HEK293 (cell line): ENCODE measurements at regions of chr19 and their contacts with region 1.

Region 1: DNA sequence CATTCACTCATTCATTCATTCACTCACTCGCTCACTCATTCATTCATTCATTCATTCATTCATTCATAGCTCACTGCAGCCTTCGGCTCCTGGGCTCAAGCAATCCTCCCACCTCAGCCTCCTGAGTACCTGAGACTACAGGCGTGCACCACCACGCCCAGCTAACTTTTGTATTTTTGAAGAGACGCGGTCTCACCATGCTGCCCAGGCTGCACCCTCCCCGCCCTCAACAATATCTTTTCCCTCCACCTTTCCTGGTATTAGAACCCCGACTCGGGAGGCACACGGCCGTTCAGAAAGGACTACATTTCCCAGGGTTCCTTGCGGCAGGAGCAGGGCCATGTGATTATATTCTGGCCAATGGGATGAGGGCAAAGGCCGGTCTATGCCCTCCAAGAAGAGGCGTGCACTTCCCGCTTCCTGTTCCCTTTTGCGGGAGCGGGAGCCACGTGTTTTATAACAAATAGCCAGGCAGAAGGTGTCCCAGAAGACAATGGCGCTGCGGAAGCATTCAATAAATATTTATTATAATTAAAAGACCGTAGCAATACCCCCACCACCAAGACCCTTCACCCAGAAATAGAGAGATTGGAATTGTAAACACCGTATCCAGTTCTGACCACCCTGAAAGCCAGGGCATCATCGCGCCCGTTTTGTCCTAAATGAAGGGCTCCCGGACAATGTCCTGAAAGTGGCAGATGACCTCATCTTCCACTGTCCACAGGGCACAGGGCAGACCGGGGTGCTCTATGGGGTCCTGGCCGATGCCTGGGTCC is 15.9 kb downstream of the TICAM1 start:
- H3K4me3 ChIP-seq: no peak overlapping the region
- H3K27ac ChIP-seq: no peak overlapping the region
- H3K4me1 ChIP-seq: no peaks in the 10 kb centered on the region
- CTCF ChIP-seq: no peak

Region 2: DNA sequence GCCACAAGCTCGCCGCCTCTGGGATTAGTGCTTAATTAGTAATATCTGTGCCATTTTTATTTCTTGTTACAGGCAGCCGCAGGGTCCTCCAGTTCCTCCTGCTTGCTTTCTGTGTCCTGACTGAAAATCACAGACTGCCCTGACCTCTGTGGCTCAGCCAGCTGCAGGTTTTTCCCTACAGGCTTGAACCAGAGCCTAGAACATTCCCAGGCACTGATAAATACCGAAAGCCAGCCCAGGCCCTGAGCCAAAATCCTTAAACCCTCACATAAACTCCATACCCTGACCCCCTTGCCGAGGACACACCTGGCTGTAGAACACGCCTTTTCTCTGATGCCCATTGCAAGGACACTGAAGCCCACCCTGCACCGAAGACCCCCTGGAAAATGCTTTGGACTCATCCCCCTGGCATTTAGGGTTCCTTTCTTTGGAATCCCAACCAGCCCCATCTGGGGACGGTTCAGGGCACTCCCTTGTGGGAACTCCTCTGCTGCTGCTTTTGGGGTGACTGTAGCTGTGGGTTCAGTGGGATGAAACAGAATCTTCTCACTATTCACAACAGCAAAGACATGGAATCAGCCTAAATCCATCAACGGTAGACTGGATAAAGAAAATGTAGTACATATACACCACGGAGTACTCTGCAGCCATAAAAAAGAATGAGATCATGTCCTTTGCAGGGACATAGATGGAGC is 107.5 kb before region 1 on chr19:
- CTCF ChIA-PET with region 1: no interaction called
- POLR2A ChIA-PET with region 1: no interaction called
- H3K4me3 ChIP-seq: no peak overlapping the region
- H3K27ac ChIP-seq: no peak overlapping the region
- H3K4me1 ChIP-seq: no peaks in the 10 kb centered on the region
- CTCF ChIP-seq: no peak

Region 3: GRCh38 chr19:4851551-4852290 is 36.1 kb after region 1 on chr19:
- CTCF ChIA-PET with region 1: interaction called, 171 read pairs
- POLR2A ChIA-PET with region 1: interaction called, 6 read pairs
- H3K4me3 ChIP-seq: no peak overlapping the region
- H3K27ac ChIP-seq: no peak overlapping the region
- H3K4me1 ChIP-seq: no peaks in the 10 kb centered on the region
- CTCF ChIP-seq: peak; percentile 92

Region 4: DNA sequence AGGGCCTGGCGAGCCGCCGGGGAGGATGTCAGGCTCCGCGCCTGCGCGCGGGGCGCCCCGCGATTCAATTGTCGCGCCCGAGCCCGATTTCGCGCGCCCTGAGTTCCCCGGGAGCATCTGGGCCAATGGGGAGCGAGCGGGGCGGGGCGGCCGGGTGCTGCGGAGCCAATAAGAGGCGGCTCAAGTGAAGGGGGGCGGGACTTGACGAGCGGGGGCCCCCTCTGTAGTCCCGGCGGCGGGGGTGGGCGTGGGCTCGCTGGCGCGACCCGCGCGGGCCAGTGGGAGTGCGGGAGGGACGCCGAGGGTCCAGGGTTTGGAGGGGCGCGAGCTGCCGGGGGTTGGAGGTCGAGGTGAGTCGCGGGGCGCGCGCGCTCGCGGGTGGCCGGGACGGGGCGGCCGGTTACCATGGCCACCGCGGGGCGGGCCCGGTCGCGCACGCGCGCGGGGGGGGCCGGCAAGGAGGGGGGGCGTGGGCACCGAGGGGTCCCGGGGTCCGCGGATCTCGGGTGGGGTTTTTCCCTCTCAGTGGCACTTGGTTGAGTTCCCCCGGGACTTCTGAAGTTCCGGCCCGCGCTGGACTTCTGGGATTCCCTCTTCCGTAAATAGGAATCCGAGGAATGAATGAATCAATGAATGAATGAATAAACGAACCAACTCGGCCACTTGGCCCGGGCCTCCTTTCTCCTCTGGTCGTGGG is 94.4 kb after region 1 on chr19:
- CTCF ChIA-PET with region 1: interaction called, 60 read pairs
- POLR2A ChIA-PET with region 1: interaction called, 14 read pairs
- H3K4me3 ChIP-seq: peak overlapping the region; percentile 77
- H3K27ac ChIP-seq: peak overlapping the region; percentile 92
- H3K4me1 ChIP-seq: peaks cover 13% of the 10 kb centered on the region
- CTCF ChIP-seq: no peak

Region 5: DNA sequence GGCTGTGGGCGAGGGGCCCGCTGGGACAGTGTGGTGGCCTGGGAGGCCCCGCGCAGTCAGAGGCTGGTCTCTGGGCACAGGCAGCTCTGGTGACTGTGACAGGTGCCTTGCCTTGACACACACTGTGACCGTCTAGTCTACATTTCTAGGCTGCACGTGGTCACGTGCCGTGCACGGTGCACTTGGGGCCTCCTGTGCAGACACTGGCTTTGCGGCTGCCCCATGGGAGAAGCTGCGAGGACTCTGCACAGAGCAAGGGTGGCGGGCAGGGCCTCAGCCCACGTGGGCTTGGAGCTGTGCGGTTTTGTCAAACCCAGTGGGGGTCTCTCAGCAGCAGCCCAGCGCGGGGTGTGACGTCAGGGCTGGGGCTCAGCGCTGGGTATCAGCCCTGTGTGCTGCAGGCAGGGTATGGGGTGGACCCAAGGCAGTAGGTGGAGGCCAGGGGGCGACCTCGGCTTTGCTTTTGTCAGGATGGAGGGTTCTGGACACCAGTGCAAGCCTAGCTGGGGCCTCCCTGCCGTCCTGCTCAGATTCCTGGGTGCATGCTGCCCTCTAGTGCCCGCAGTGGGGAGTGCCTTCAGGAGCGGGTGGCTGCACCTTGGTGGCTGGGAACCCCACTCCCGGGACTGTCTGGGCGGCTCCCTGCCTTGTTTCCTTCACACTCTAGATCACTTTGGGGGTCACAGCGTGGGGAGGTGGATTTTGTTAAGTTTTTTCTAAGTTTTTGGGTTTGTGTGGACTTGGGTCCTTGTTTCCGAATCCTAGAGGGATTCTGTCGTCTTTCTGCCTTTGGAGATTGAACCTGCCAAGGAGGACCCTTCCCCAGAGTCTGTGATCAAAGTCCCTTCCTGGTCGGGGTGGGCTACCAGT is 215.9 kb after region 1 on chr19:
- CTCF ChIA-PET with region 1: interaction called, 139 read pairs
- POLR2A ChIA-PET with region 1: no interaction called
- H3K4me3 ChIP-seq: no peak overlapping the region
- H3K27ac ChIP-seq: no peak overlapping the region
- H3K4me1 ChIP-seq: peaks cover 2% of the 10 kb centered on the region; the same call in 1 of the 2 replicates
- CTCF ChIP-seq: peak; percentile 98